Activated naive CD4-positive, alpha-beta T cell treated with anti-CD3 and anti-CD28 coated beads for 36 hours (primary cell): ENCODE measurements at regions of chr12 and their contacts with region 1.

Region 1: DNA sequence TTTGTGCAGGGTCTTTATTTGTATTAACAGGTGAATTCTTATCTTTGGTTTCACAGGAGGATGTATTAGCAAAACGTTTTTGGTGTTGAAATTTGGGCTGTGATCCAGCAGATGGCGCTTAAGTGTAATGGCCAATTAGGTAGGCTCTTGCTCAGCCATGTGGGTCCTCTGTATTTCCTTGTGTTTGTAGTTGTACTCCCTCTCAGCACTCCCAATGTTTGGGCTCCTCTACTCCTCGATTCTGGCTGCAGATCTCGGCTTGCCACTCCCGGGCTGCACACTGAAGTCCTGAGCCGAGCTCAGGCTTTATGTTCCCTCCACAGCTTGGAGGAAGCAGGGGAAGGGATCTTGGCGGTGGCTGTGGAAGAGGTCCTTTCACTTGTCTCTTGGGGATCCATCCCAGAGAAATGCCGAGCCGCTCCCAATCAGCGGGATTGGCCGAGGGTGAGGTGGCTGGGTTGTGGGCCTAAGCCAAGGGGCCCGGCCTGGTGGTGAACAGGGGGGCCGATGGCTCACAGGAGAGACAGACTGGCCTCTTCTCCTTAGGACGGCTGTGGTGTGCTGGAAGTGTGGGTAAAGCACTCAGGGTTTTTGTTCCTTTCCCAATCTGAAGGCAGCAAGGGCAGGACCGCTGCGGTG is 133.7 kb downstream of the AEBP2 start:
- DNase-seq: peak; percentile 54
- H3K4me3 Mint-ChIP-seq: no peak overlapping the region
- H3K27ac Mint-ChIP-seq: no peak overlapping the region
- H3K4me1 Mint-ChIP-seq: no peaks in the 10 kb centered on the region
- H3K27me3 Mint-ChIP-seq: no peaks in the 10 kb centered on the region

Region 2: GRCh38 chr12:19739183-19739776 is 166.2 kb after region 1 on chr12:
- CTCF ChIA-PET with region 1: interaction called, 3 read pairs
- intact Hi-C with region 1: loop called (anchors 10 kb)
- DNase-seq: peak; percentile 46
- H3K4me3 Mint-ChIP-seq: no peak overlapping the region
- H3K27ac Mint-ChIP-seq: no peak overlapping the region
- H3K4me1 Mint-ChIP-seq: no peaks in the 10 kb centered on the region
- H3K27me3 Mint-ChIP-seq: no peaks in the 10 kb centered on the region

Region 3: GRCh38 chr12:19893514-19893913 is 320.5 kb after region 1 on chr12:
- CTCF ChIA-PET with region 1: no interaction called
- intact Hi-C with region 1: loop called (anchors 10 kb)
- DNase-seq: no peak
- H3K4me3 Mint-ChIP-seq: no peak overlapping the region
- H3K27ac Mint-ChIP-seq: no peak overlapping the region
- H3K4me1 Mint-ChIP-seq: peaks cover 8% of the 10 kb centered on the region
- H3K27me3 Mint-ChIP-seq: peaks cover 2% of the 10 kb centered on the region